ENCODE measurements at regions of chr6 and their contacts with region 1.

Region 1: GRCh38 chr6:110389689-110390382 is 25.5 kb downstream of the DDO start:
- DNase-seq: no peak
- H3K4me3 Mint-ChIP-seq: no peak overlapping the region
- H3K27ac Mint-ChIP-seq: no peak overlapping the region
- H3K4me1 Mint-ChIP-seq: peaks cover 8% of the 10 kb centered on the region
- H3K27me3 Mint-ChIP-seq: no peaks in the 10 kb centered on the region
- CTCF ChIP-seq: no peak

Region 2: GRCh38 chr6:110053395-110054240 is 336.2 kb before region 1 on chr6:
- CTCF ChIA-PET with region 1: no interaction called
- intact Hi-C with region 1: loop called (anchors 5 kb)
- DNase-seq: peak; percentile 44
- H3K4me3 Mint-ChIP-seq: no peak overlapping the region
- H3K27ac Mint-ChIP-seq: no peak overlapping the region
- H3K4me1 Mint-ChIP-seq: no peaks in the 10 kb centered on the region
- H3K27me3 Mint-ChIP-seq: peaks cover 17% of the 10 kb centered on the region
- CTCF ChIP-seq: no peak

Region 3: GRCh38 chr6:110179401-110180227 is 210.2 kb before region 1 on chr6 and contains the start of gene WASF1:
- CTCF ChIA-PET with region 1: interaction called, 7 read pairs
- intact Hi-C with region 1: loop called (anchors 2 kb)
- DNase-seq: peak; percentile 95
- H3K4me3 Mint-ChIP-seq: no peak within 1 kb of the TSS
- H3K27ac Mint-ChIP-seq: no peak within 1 kb of the TSS
- H3K4me1 Mint-ChIP-seq: no peaks in the 10 kb centered on the region
- H3K27me3 Mint-ChIP-seq: no peaks in the 10 kb centered on the region
- CTCF ChIP-seq: no peak
- total RNA-seq, gene WASF1: 11.3 and 12.7 TPM in 2 replicates